Esophagus muscularis mucosa (tissue), 4 donors: ENCODE measurements at regions of chr12 and their contacts with region 1.

Region 1: DNA sequence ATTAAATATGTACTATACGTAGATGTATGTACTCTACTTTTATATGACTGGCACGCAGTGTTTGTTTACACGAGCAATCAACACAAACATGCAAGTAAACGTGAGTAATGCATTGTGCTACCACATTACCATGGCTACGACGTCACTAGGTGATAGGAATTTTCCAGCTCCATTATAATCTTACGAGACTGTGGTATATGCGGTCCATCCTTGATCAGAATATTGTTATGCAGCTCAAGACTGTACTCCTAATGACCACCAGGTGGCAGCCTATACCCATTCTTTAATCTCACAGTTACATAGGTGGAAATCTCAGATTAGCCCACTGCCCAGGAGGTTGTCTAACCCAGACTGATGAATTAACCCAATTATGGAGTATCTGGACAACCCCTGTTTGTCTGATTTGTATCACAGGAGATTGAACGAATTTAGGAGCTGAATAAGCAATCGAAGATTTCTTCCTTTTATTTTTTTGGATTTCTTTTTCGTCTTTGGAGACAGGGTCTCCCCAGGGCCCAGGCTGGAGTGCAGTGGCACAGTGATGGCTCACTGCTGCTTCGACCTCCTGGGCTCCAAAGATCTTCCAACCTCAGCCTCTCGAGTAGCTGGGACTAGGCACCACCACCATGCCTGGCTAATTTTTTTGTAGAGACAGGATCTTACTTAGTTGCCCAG is 8.7 kb upstream of the TESPA1 start:
- DNase-seq: peak; percentile 82
- H3K4me3 ChIP-seq: no peak overlapping the region
- H3K27ac ChIP-seq: no peak overlapping the region
- H3K4me1 ChIP-seq: peaks cover 0 to 14% (median 11%) of the 10 kb centered on the region in 4 donors
- H3K27me3 ChIP-seq: no peaks in the 10 kb centered on the region
- CTCF ChIP-seq: peak; percentile 84 to 93 (median 89)
- EP300 ChIP-seq: no peak
- POLR2A ChIP-seq: no peak

Region 2: GRCh38 chr12:55073043-55074022 is 80.0 kb after region 1 on chr12:
- intact Hi-C with region 1: loop called (anchors 2 kb)
- DNase-seq: no peak
- H3K4me3 ChIP-seq: no peak overlapping the region
- H3K27ac ChIP-seq: no peak overlapping the region
- H3K4me1 ChIP-seq: no peaks in the 10 kb centered on the region
- H3K27me3 ChIP-seq: peaks cover 0 to 6% (median 0%) of the 10 kb centered on the region in 4 donors
- CTCF ChIP-seq: peak; percentile 75 to 82 (median 81)
- EP300 ChIP-seq: no peak
- POLR2A ChIP-seq: no peak

Region 3: DNA sequence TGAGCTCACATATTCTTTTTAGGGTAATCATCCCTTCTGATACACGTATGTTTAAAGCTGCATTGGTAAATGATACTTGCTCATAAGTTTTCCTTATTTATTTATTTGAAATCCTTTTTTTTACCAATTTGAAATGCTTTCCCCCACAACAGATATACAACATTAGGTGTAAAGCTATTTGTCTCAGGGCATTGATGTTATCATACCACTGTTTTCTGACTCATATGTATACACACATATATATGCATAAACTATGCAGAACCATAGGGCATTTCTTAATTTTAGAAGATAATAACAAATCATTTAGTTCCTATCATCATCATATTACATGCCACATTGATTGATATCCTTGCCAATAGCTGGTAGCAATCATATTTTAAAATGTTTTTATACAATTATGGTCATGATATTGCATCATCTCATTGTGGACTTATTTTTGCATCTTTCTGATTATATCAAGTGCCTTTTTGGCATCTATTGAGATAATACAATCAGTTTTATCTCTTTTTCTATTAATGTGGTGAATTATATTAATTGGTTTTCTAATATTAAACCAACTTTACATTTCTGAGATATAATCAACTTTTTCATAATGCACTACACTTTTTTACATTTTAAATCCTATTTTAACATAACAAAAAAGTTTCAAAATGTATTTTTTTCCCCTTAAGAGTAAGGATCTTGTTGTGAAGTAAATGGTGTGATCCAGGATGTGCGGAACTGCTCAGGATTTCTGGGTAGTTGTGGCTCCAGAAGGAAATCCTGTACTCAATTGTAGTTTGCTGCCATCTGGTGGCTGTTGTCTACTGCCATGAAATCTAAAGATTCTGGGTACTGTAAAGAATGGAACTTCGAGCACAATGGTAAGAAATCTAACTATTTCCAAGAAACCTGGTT is 149.6 kb after region 1 on chr12:
- intact Hi-C with region 1: loop called (anchors 5 kb)
- DNase-seq: no peak
- H3K4me3 ChIP-seq: no peak overlapping the region
- H3K27ac ChIP-seq: no peak overlapping the region
- H3K4me1 ChIP-seq: no peaks in the 10 kb centered on the region
- H3K27me3 ChIP-seq: no peaks in the 10 kb centered on the region
- CTCF ChIP-seq: peak; percentile 34 to 62 (median 51)
- EP300 ChIP-seq: no peak
- POLR2A ChIP-seq: no peak